Mammary epithelial cell (primary cell): ENCODE measurements at regions of chr14 and their contacts with region 1.

Region 1: GRCh38 chr14:21014761-21015190 is 10.1 kb downstream of the NDRG2 start:
- DNase-seq: peak; percentile 68
- H3K4me3 ChIP-seq: no peak overlapping the region
- H3K27ac ChIP-seq: no peak overlapping the region
- H3K4me1 ChIP-seq: no peaks in the 10 kb centered on the region
- H3K27me3 ChIP-seq: no peaks in the 10 kb centered on the region
- CTCF ChIP-seq: peak; percentile 83 to 91

Region 2: GRCh38 chr14:21057803-21058675 is 43.3 kb after region 1 on chr14 and contains the start of gene RNASE8:
- CTCF ChIA-PET with region 1: interaction called, 5 read pairs
- dilution Hi-C with region 1: no loop called
- in situ Hi-C with region 1: no loop called
- intact Hi-C with region 1: loop called (anchors 1 kb)
- DNase-seq: peak; percentile 48
- H3K4me3 ChIP-seq: no peak within 1 kb of the TSS
- H3K27ac ChIP-seq: no peak within 1 kb of the TSS
- H3K4me1 ChIP-seq: peaks cover 4% of the 10 kb centered on the region
- H3K27me3 ChIP-seq: no peaks in the 10 kb centered on the region
- CTCF ChIP-seq: no peak
- total RNA-seq, gene RNASE8: not detected

Region 3: DNA sequence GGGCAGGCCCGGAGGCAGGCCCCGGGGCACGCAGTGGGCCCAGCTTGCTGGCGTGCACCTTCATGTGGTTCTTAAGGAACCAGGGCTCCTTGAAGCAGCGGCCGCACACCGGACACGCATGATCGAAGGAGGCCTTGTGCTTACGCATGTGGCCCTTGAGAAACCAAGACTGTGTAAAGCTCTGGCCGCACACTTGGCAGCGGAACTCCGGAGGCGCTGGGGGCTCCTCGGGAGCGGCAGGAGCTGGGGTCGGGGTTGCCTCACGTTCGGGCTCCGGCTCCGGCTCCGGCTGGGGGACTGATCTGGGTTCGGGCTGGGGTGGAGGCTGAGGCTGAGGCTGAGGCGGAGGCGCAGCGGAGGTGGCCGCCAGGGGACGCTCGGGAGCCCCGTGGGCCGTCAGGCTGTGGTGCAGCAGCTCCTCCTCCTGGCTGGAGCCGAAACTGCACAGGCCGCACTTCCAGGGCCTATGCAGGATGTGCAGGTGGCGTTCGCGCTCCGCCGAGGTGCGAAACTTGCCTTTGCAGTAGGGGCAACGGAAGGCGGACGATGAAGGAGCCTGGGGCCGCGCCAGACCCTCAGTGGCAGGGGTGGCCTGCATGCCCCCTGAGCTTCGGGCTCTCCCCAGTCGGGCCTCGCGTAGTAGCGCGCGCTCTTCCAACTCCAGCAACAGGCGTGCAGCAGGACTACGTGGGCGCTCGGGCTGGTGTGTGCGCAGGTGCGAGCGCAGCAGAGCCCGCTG is 77.7 kb after region 1 on chr14:
- CTCF ChIA-PET with region 1: no interaction called
- dilution Hi-C with region 1: no loop called
- in situ Hi-C with region 1: loop called in 1 of 2 experiments (anchors 10 kb)
- intact Hi-C with region 1: loop called (anchors 1 kb)
- DNase-seq: peak; percentile 56
- H3K4me3 ChIP-seq: no peak overlapping the region
- H3K27ac ChIP-seq: no peak overlapping the region
- H3K4me1 ChIP-seq: peaks cover 19% of the 10 kb centered on the region
- H3K27me3 ChIP-seq: no peaks in the 10 kb centered on the region
- CTCF ChIP-seq: peak; percentile 100

Region 4: GRCh38 chr14:21103710-21104447 is 89.1 kb after region 1 on chr14:
- CTCF ChIA-PET with region 1: interaction called, 12 read pairs
- dilution Hi-C with region 1: loop called (anchors 5 kb)
- in situ Hi-C with region 1: loop called in 1 of 2 experiments (anchors 10 kb)
- intact Hi-C with region 1: loop called (anchors 1 kb)
- DNase-seq: peak; percentile 94
- H3K4me3 ChIP-seq: peak overlapping the region; percentile 32 to 85 (median 58)
- H3K27ac ChIP-seq: peak overlapping the region; percentile 86
- H3K4me1 ChIP-seq: peaks cover 62% of the 10 kb centered on the region
- H3K27me3 ChIP-seq: no peaks in the 10 kb centered on the region
- CTCF ChIP-seq: peak; percentile 73 to 86

Region 5: DNA sequence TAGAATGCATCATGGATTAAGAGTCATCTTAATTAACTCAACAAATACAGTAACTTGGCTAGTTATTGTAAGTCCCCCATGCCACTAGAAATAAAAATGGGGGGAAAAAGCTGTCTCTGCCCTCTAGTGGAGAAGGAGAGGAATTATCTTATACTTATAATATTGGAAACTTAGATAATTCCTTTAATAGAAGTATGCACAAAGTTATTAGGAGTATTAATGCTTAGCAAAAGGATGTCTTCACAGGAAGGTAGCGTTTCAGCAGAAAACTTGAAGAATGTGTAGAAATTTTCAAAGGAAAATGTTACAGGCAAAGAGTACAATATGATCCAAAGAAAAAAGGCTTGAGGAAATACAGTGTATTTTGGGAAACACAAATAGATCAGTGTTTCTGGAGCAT is 121.2 kb after region 1 on chr14:
- CTCF ChIA-PET with region 1: no interaction called
- dilution Hi-C with region 1: no loop called
- in situ Hi-C with region 1: no loop called
- intact Hi-C with region 1: no loop called
- DNase-seq: no peak
- H3K4me3 ChIP-seq: no peak overlapping the region
- H3K27ac ChIP-seq: no peak overlapping the region
- H3K4me1 ChIP-seq: no peaks in the 10 kb centered on the region
- H3K27me3 ChIP-seq: no peaks in the 10 kb centered on the region
- CTCF ChIP-seq: peak; percentile 62 to 64